Caco-2 (cell line): ENCODE measurements at regions of chr11 and their contacts with region 1.

Region 1: GRCh38 chr11:9906043-9906791 is 242.3 kb downstream of the SWAP70 start:
- DNase-seq: peak; percentile 83 to 88
- H3K4me3 ChIP-seq: no peak overlapping the region
- H3K4me3 Mint-ChIP-seq: peak overlapping the region; percentile 51
- H3K27ac Mint-ChIP-seq: peak overlapping the region; percentile 85
- H3K4me1 ChIP-seq: peaks cover 57% of the 10 kb centered on the region
- H3K4me1 Mint-ChIP-seq: peaks cover 33% of the 10 kb centered on the region
- H3K27me3 ChIP-seq: no peaks in the 10 kb centered on the region
- H3K27me3 Mint-ChIP-seq: no peaks in the 10 kb centered on the region
- CTCF ChIP-seq: no peak

Region 2: GRCh38 chr11:9573052-9573774 is 333.0 kb before region 1 on chr11 and contains the start of gene WEE1:
- CTCF ChIA-PET with region 1: no interaction called
- POLR2A ChIA-PET with region 1: no interaction called
- intact Hi-C with region 1: loop called (anchors 2 kb)
- DNase-seq: peak; percentile 99 to 100
- H3K4me3 ChIP-seq: peak within 1 kb of the TSS; percentile 87
- H3K4me3 Mint-ChIP-seq: peak within 1 kb of the TSS; percentile 94
- H3K27ac Mint-ChIP-seq: peak within 1 kb of the TSS; percentile 100
- H3K4me1 ChIP-seq: peaks cover 40% of the 10 kb centered on the region
- H3K4me1 Mint-ChIP-seq: peaks cover 37% of the 10 kb centered on the region
- H3K27me3 ChIP-seq: no peaks in the 10 kb centered on the region
- H3K27me3 Mint-ChIP-seq: no peaks in the 10 kb centered on the region
- CTCF ChIP-seq: no peak
- total RNA-seq, gene WEE1: 108 and 116 TPM in 2 replicates

Region 3: GRCh38 chr11:9861860-9862725 is 44.1 kb before region 1 on chr11:
- CTCF ChIA-PET with region 1: interaction called, 3 read pairs
- POLR2A ChIA-PET with region 1: no interaction called
- intact Hi-C with region 1: loop called (anchors 1 kb)
- DNase-seq: peak; percentile 77 to 82
- H3K4me3 ChIP-seq: no peak overlapping the region
- H3K4me3 Mint-ChIP-seq: no peak overlapping the region
- H3K27ac Mint-ChIP-seq: no peak overlapping the region
- H3K4me1 ChIP-seq: peaks cover 60% of the 10 kb centered on the region
- H3K4me1 Mint-ChIP-seq: peaks cover 41% of the 10 kb centered on the region
- H3K27me3 ChIP-seq: no peaks in the 10 kb centered on the region
- H3K27me3 Mint-ChIP-seq: no peaks in the 10 kb centered on the region
- CTCF ChIP-seq: peak; percentile 77 to 87

Region 4: DNA sequence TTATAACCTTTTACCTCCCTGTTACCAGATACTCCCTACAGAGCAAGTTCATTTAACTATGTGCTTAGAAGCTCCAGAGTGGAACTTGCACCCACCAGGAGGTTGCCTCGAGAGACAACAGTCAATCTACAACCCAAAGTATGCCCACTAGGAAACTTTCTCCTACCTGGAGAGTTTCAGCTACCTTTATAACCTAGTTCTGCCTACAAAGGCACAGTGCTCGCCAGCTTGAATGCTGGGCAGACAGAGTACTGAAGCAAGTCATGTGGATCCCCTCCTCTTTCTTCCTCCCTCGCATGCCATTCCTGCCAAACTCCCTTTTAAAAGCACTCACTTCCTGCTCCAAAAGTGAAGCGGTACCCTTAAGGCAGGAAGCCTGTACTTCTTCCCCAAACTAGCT is 16.6 kb after region 1 on chr11:
- CTCF ChIA-PET with region 1: interaction called, 3 read pairs
- POLR2A ChIA-PET with region 1: no interaction called
- intact Hi-C with region 1: loop called (anchors 1 kb)
- DNase-seq: no peak
- H3K4me3 ChIP-seq: no peak overlapping the region
- H3K4me3 Mint-ChIP-seq: no peak overlapping the region
- H3K27ac Mint-ChIP-seq: peak overlapping the region; percentile 80
- H3K4me1 ChIP-seq: peaks cover 46% of the 10 kb centered on the region
- H3K4me1 Mint-ChIP-seq: peaks cover 25% of the 10 kb centered on the region
- H3K27me3 ChIP-seq: no peaks in the 10 kb centered on the region
- H3K27me3 Mint-ChIP-seq: no peaks in the 10 kb centered on the region
- CTCF ChIP-seq: no peak

Region 5: GRCh38 chr11:9943386-9944110 is 37.3 kb after region 1 on chr11:
- CTCF ChIA-PET with region 1: no interaction called
- POLR2A ChIA-PET with region 1: no interaction called
- intact Hi-C with region 1: no loop called
- DNase-seq: no peak
- H3K4me3 ChIP-seq: no peak overlapping the region
- H3K4me3 Mint-ChIP-seq: no peak overlapping the region
- H3K27ac Mint-ChIP-seq: no peak overlapping the region
- H3K4me1 ChIP-seq: no peaks in the 10 kb centered on the region
- H3K4me1 Mint-ChIP-seq: peaks cover 7% of the 10 kb centered on the region
- H3K27me3 ChIP-seq: no peaks in the 10 kb centered on the region
- H3K27me3 Mint-ChIP-seq: no peaks in the 10 kb centered on the region
- CTCF ChIP-seq: no peak

Region 6: GRCh38 chr11:9972989-9973388 is 66.8 kb after region 1 on chr11:
- CTCF ChIA-PET with region 1: no interaction called
- POLR2A ChIA-PET with region 1: no interaction called
- intact Hi-C with region 1: loop called (anchors 1 kb)
- DNase-seq: peak in 1 of 2 experiments; percentile 41
- H3K4me3 ChIP-seq: no peak overlapping the region
- H3K4me3 Mint-ChIP-seq: no peak overlapping the region
- H3K27ac Mint-ChIP-seq: no peak overlapping the region
- H3K4me1 ChIP-seq: peaks cover 18% of the 10 kb centered on the region
- H3K4me1 Mint-ChIP-seq: peaks cover 6% of the 10 kb centered on the region
- H3K27me3 ChIP-seq: no peaks in the 10 kb centered on the region
- H3K27me3 Mint-ChIP-seq: no peaks in the 10 kb centered on the region
- CTCF ChIP-seq: peak; percentile 62 to 82

Region 7: GRCh38 chr11:10087186-10087585 is 181.0 kb after region 1 on chr11:
- CTCF ChIA-PET with region 1: no interaction called
- POLR2A ChIA-PET with region 1: no interaction called
- intact Hi-C with region 1: no loop called
- DNase-seq: no peak
- H3K4me3 ChIP-seq: no peak overlapping the region
- H3K4me3 Mint-ChIP-seq: no peak overlapping the region
- H3K27ac Mint-ChIP-seq: no peak overlapping the region
- H3K4me1 ChIP-seq: peaks cover 6% of the 10 kb centered on the region
- H3K4me1 Mint-ChIP-seq: peaks cover 14% of the 10 kb centered on the region
- H3K27me3 ChIP-seq: no peaks in the 10 kb centered on the region
- H3K27me3 Mint-ChIP-seq: no peaks in the 10 kb centered on the region
- CTCF ChIP-seq: no peak

Region 8: GRCh38 chr11:10328314-10329090 is 422.3 kb after region 1 on chr11:
- CTCF ChIA-PET with region 1: no interaction called
- POLR2A ChIA-PET with region 1: no interaction called
- intact Hi-C with region 1: loop called (anchors 1 kb)
- DNase-seq: peak; percentile 66 to 73
- H3K4me3 ChIP-seq: no peak overlapping the region
- H3K4me3 Mint-ChIP-seq: peak overlapping the region; percentile 39
- H3K27ac Mint-ChIP-seq: peak overlapping the region; percentile 14
- H3K4me1 ChIP-seq: peaks cover 63% of the 10 kb centered on the region
- H3K4me1 Mint-ChIP-seq: peaks cover 36% of the 10 kb centered on the region
- H3K27me3 ChIP-seq: no peaks in the 10 kb centered on the region
- H3K27me3 Mint-ChIP-seq: no peaks in the 10 kb centered on the region
- CTCF ChIP-seq: no peak

Region 9: GRCh38 chr11:11148104-11148509 is 1241.9 kb after region 1 on chr11:
- CTCF ChIA-PET with region 1: no interaction called
- POLR2A ChIA-PET with region 1: no interaction called
- intact Hi-C with region 1: no loop called
- DNase-seq: peak; percentile 72 to 77
- H3K4me3 ChIP-seq: no peak overlapping the region
- H3K4me3 Mint-ChIP-seq: no peak overlapping the region
- H3K27ac Mint-ChIP-seq: peak overlapping the region; percentile 83
- H3K4me1 ChIP-seq: peaks cover 12% of the 10 kb centered on the region
- H3K4me1 Mint-ChIP-seq: peaks cover 21% of the 10 kb centered on the region
- H3K27me3 ChIP-seq: no peaks in the 10 kb centered on the region
- H3K27me3 Mint-ChIP-seq: no peaks in the 10 kb centered on the region
- CTCF ChIP-seq: peak; percentile 20 to 32